Activated T-helper 1 cell treated with anti-CD3 and anti-CD28 coated beads, Interleukin-12 subunit alpha, Interleukin-12 subunit beta, Interleukin-2, Interleukin-4 antibody, amounts not matched to agents 30 ng/mL and 10 ng/mL and 1 ng/mL, durations not matched to agents 14 hours and 24 hours and 36 hours (primary cell): ENCODE measurements at regions of chr17 and their contacts with region 1.

Region 1: DNA sequence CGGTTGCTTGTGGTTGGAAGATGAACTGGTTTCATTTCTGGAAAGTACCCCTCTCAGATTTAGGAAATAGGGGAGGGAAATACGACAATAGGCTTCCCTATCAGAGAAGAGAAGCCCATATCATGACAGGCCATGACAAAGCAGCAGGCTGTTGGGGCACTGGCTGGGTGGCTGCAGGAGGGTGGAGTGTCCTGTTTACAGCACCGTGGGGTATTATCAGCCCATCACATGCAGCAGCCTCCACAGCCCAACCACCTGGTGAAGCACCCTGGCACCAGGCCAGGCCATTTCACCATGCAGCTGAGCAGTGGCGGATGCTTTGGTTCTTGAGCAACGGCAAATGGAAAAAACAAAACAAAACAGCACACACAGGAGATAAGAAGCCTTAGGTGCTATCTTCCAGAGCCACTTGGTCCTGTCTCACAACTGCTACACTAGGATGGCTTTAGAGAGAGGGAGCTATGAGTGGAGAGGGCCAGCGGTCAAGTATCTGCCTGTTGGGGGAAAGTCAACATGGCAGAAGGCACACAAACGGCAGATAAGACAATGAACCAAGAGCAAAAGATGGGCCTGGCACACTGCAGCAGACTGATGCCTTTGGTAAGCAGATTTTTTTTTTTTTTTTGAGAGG is 24.2 kb downstream of the FAM117A start:
- DNase-seq: peak; percentile 83
- H3K4me3 Mint-ChIP-seq: peak overlapping the region; percentile 80
- H3K27ac Mint-ChIP-seq: peak overlapping the region; percentile 99
- H3K4me1 Mint-ChIP-seq: peaks cover 72% of the 10 kb centered on the region
- H3K27me3 Mint-ChIP-seq: no peaks in the 10 kb centered on the region

Region 2: DNA sequence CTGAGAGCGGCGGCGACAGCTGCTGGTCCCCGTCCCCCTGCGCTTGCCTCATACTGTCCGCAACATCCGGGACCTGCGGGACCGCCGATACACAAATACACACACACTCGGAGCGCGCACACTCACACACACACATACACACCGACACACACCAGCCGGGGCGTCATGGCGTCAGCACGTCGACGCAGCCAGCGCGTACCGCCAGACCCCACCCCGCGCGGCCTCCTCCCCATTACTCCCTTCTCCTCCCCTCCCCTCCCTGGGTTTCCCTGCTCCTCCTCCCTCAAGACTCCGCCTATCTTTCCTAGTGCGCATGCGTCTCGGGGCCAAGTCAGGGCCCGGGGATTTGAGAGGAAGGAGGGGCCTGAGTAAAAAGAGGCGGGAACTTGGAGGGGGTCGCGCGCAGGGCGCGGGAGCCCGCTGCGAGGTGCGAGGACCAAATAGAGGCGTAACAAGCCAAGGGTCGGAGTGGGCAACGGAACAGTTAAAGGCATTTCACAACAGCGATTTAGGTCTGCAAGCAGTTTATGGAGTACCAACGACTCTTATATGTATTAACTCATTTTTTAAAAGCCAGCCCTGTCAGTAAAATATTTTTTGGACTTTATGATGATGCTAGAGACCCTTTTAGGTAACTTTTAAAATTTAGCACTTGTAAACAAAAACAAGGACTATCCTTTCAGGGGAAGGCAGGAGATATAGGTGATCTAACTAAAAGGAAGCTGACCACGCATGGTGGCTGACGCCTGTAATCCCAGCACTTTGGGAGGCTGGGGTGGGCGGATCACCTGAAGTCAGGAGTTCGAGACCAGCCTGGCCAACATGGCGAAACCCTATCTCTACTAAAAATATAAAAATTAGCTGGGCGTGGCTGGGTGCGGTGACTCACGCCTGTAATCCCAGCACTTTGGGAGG is 61.6 kb before region 1 on chr17 and contains the start of gene SPOP:
- intact Hi-C with region 1: no loop called
- DNase-seq: peak; percentile 99
- H3K4me3 Mint-ChIP-seq: peak within 1 kb of the TSS; percentile 91
- H3K27ac Mint-ChIP-seq: peak within 1 kb of the TSS; percentile 99
- H3K4me1 Mint-ChIP-seq: peaks cover 41% of the 10 kb centered on the region
- H3K27me3 Mint-ChIP-seq: peaks cover 5% of the 10 kb centered on the region
- total RNA-seq, gene SPOP: 58.3 and 61.9 TPM in 2 replicates

Region 3: DNA sequence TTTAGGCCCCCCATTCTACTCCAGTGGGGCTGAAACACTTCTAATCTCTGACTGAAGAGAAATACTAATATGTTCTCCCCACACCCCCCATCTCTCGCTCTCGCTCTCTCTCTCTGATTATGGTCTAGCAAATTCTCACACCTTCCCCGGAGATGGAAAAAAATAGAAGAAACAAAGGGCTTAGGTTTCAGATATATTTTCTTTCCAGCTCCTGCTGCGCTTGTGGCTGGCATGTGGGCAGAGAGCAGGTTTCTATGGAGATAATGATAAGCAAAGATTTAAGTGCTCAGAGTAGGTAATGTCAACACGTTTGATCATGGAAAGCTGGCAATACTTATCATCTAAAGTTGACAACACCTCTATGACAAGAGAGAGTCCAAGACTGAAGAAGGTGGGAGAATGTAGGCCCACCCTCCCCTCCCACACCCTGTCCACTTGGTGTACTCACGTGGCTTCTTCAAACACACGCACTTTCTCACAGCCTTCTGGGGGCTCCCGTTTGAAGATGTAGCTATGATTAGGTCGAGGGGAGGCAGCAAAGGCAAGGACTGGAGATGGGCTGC is 24.0 kb before region 1 on chr17:
- intact Hi-C with region 1: loop called (anchors 1 kb)
- DNase-seq: no peak
- H3K4me3 Mint-ChIP-seq: peak overlapping the region; percentile 55
- H3K27ac Mint-ChIP-seq: peak overlapping the region; percentile 93
- H3K4me1 Mint-ChIP-seq: peaks cover 26% of the 10 kb centered on the region
- H3K27me3 Mint-ChIP-seq: no peaks in the 10 kb centered on the region

Region 4: GRCh38 chr17:49843774-49844350 is 104.1 kb after region 1 on chr17:
- intact Hi-C with region 1: no loop called
- DNase-seq: no peak
- H3K4me3 Mint-ChIP-seq: no peak overlapping the region
- H3K27ac Mint-ChIP-seq: no peak overlapping the region
- H3K4me1 Mint-ChIP-seq: peaks cover 6% of the 10 kb centered on the region
- H3K27me3 Mint-ChIP-seq: peaks cover 2% of the 10 kb centered on the region

Region 5: GRCh38 chr17:50001140-50001714 is 261.5 kb after region 1 on chr17:
- intact Hi-C with region 1: no loop called
- DNase-seq: no peak
- H3K4me3 Mint-ChIP-seq: no peak overlapping the region
- H3K27ac Mint-ChIP-seq: no peak overlapping the region
- H3K4me1 Mint-ChIP-seq: peaks cover 5% of the 10 kb centered on the region
- H3K27me3 Mint-ChIP-seq: peaks cover 35% of the 10 kb centered on the region